ENCODE measurements at regions of chr7 and their contacts with region 1.

Region 1: DNA sequence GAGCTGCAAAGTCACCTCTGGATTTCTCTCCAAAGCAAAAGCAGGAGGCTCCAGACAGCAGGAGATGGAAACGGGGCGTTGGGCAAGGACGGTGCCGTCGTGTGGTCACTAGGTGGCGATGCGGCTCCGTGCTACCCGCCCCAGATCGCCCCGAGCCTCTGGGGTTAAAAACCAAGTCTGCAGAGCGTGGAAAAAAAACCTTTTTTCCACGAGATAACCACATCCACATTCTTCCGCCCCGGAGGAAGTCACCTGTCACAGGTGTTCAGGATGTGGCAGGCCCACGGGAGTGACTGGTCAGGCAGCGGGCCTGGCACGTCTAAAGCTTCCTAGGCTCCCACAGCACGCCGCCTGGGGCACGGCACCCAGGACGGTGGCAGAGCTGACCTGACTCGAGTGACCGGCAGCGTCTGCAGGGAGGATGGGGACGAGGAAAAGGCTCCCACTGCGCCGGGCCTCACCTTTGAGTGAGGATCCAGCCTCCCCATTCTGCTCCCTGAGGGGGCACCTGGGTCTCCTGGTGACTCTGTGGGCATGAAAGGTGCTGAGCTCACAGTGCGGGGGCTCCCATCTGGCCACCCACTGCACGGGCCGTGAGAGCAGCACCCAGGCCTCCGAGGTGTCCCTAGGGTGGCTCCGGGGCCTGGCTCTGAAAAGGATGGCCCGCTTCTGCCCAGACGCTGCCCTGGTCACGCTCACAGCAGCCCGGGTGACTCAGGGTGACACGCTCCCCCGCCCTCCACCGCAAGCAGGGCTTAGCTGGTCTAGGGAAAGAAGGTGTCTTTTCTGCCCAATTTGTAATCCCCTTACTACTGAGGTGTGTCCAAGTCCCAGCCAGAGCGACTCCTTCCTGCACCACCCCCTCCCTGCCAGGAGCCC is 71.3 kb upstream of the TNRC18 start:
- DNase-seq: peak; percentile 66 to 90
- ATAC-seq: peak; percentile 85 to 90 (median 89)
- H3K4me3 ChIP-seq: no peak overlapping the region
- H3K4me3 Mint-ChIP-seq: no peak overlapping the region
- H3K27ac ChIP-seq: peak overlapping the region; percentile 9
- H3K27ac Mint-ChIP-seq: no peak overlapping the region
- H3K4me1 ChIP-seq: peaks cover 18% of the 10 kb centered on the region
- H3K4me1 Mint-ChIP-seq: peaks cover 6 to 21% of the 10 kb centered on the region in 2 donors
- H3K27me3 ChIP-seq: no peaks in the 10 kb centered on the region
- H3K27me3 Mint-ChIP-seq: no peaks in the 10 kb centered on the region
- CTCF ChIP-seq: peak; percentile 95

Region 2: GRCh38 chr7:5557920-5558401 is 63.0 kb after region 1 on chr7:
- intact Hi-C with region 1: loop called (anchors 2 kb)
- DNase-seq: peak in 1 of 2 donors; percentile 52
- ATAC-seq: no peak
- H3K4me3 ChIP-seq: peak overlapping the region; percentile 9
- H3K4me3 Mint-ChIP-seq: peak overlapping the region; percentile 68
- H3K27ac ChIP-seq: peak overlapping the region; percentile 93
- H3K27ac Mint-ChIP-seq: peak overlapping the region; percentile 85 to 91
- H3K4me1 ChIP-seq: peaks cover 63% of the 10 kb centered on the region
- H3K4me1 Mint-ChIP-seq: peaks cover 21 to 52% of the 10 kb centered on the region in 2 donors
- H3K27me3 ChIP-seq: peaks cover 12% of the 10 kb centered on the region
- H3K27me3 Mint-ChIP-seq: peaks cover 0 to 12% of the 10 kb centered on the region in 2 donors
- CTCF ChIP-seq: no peak

Region 3: DNA sequence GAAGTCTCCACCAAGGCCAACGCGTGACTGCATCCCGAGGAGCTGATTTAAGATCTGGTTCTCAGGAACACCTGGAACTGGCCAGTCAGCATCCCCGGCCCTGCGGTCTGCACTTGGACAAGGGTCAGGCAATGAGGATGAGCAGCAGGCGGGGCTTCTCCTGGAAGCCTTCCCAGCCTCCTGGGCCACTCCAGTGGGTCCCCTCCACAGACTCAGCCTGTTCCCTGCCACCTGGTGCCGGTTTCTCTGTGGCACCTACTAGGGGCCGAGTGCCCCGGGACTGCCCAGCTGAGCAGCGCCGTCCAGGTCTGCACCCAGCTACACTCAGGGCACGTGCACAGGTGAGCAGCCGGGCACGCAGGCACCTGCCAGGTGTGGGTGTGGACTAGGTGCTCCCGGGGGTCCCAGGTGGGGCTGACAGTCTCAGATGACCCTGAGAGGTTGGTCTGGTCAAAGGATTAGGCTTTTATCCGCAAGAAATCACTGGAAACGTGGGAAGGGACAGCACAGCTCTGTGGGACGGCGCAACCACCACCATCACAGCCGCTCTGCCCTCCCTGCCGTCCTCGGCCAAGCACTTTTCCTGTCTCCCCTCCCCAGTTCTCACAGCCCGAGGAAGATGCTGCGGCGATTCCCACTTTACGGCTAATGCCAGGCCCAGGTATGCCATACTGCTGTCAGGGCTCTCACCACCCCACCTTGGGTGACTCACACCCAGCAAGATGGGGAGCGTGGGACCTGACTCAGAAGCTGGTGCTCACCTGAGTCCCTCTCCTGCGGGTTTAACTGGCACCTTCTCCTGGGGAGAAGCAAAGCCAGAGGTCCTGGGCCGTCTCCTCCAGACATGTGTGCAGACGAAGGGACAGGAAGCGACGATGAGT is 120.5 kb after region 1 on chr7:
- intact Hi-C with region 1: no loop called
- DNase-seq: no peak
- ATAC-seq: no peak
- H3K4me3 ChIP-seq: no peak overlapping the region
- H3K4me3 Mint-ChIP-seq: no peak overlapping the region
- H3K27ac ChIP-seq: no peak overlapping the region
- H3K27ac Mint-ChIP-seq: no peak overlapping the region
- H3K4me1 ChIP-seq: no peaks in the 10 kb centered on the region
- H3K4me1 Mint-ChIP-seq: no peaks in the 10 kb centered on the region
- H3K27me3 ChIP-seq: no peaks in the 10 kb centered on the region
- H3K27me3 Mint-ChIP-seq: no peaks in the 10 kb centered on the region
- CTCF ChIP-seq: no peak

Region 4: DNA sequence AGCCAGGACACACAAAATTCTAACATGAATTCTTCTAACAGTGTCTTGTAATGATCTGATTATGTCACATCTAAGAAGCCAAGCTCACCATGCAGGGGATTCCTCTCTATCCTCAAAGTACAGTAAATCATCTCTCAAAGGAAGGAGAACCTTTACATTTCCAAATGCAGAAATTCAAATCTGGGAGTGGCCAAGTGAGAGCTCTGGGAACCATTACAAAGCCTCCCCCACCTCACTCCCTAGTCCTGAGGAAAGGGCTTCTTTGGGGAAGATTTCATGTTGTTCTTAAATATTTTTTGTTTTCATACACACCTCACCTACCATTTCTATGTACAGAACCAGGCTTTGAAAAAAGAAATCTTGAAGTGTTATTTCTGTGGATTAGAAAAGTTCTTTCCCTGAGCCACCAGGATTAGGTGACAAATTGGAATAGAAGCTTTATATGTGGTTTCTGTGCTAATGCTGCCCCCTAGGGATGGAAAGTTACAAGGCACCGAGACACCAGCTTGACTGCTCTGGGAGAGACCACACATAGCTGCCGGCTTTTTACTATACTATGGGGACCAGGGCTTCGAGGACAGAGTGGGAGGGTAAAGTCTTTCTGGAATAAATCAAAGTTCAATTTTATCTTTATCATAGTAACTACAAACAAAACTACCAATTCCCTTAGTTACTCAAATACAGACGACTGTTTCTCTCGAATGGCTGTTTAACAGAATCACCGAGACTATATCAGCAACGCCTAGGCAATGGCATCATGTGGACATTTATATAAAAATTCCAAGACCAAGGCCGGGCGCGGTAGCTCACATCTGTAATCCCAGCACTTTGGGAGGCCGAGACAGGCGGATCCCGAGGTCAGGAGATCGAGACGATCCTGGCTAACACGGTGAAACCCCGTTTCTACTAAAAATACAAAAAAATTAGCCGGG is 170.4 kb after region 1 on chr7:
- intact Hi-C with region 1: loop called (anchors 1 kb)
- DNase-seq: peak; percentile 52 to 87
- ATAC-seq: peak; percentile 50 to 73 (median 52)
- H3K4me3 ChIP-seq: no peak overlapping the region
- H3K4me3 Mint-ChIP-seq: no peak overlapping the region
- H3K27ac ChIP-seq: no peak overlapping the region
- H3K27ac Mint-ChIP-seq: no peak overlapping the region
- H3K4me1 ChIP-seq: peaks cover 29% of the 10 kb centered on the region
- H3K4me1 Mint-ChIP-seq: peaks cover 22 to 24% of the 10 kb centered on the region in 2 donors
- H3K27me3 ChIP-seq: no peaks in the 10 kb centered on the region
- H3K27me3 Mint-ChIP-seq: no peaks in the 10 kb centered on the region
- CTCF ChIP-seq: peak; percentile 85

Region 5: GRCh38 chr7:5704534-5704922 is 209.6 kb after region 1 on chr7:
- intact Hi-C with region 1: loop called (anchors 1 kb)
- DNase-seq: peak; percentile 57 to 89
- ATAC-seq: peak; percentile 41 to 58 (median 46)
- H3K4me3 ChIP-seq: no peak overlapping the region
- H3K4me3 Mint-ChIP-seq: no peak overlapping the region
- H3K27ac ChIP-seq: no peak overlapping the region
- H3K27ac Mint-ChIP-seq: no peak overlapping the region
- H3K4me1 ChIP-seq: peaks cover 26% of the 10 kb centered on the region
- H3K4me1 Mint-ChIP-seq: peaks cover 31 to 32% of the 10 kb centered on the region in 2 donors
- H3K27me3 ChIP-seq: no peaks in the 10 kb centered on the region
- H3K27me3 Mint-ChIP-seq: no peaks in the 10 kb centered on the region
- CTCF ChIP-seq: peak; percentile 72

Region 6: GRCh38 chr7:5822742-5823503 is 328.0 kb after region 1 on chr7:
- intact Hi-C with region 1: loop called (anchors 5 kb)
- DNase-seq: peak; percentile 92 to 98
- ATAC-seq: peak; percentile 96 to 100 (median 97)
- H3K4me3 ChIP-seq: peak overlapping the region; percentile 66
- H3K4me3 Mint-ChIP-seq: peak overlapping the region; percentile 87
- H3K27ac ChIP-seq: peak overlapping the region; percentile 89
- H3K27ac Mint-ChIP-seq: peak overlapping the region; percentile 87 to 90
- H3K4me1 ChIP-seq: peaks cover 19% of the 10 kb centered on the region
- H3K4me1 Mint-ChIP-seq: peaks cover 12 to 15% of the 10 kb centered on the region in 2 donors
- H3K27me3 ChIP-seq: no peaks in the 10 kb centered on the region
- H3K27me3 Mint-ChIP-seq: no peaks in the 10 kb centered on the region
- CTCF ChIP-seq: no peak